Activated T-helper 2 cell treated with anti-CD3 and anti-CD28 coated beads, Interferon-gamma antibody, Interleukin-2, Interleukin-4, amounts not matched to agents 10 μg/mL and 5 μg/mL and 100 μg/mL, durations not matched to agents 14 hours and 24 hours and 36 hours (primary cell): ENCODE measurements at regions of chr20 and their contacts with region 1.

Region 1: GRCh38 chr20:4082406-4083097 is 67.2 kb upstream of the RNF24 start:
- DNase-seq: peak; percentile 70
- H3K4me3 Mint-ChIP-seq: peak overlapping the region; percentile 26
- H3K27ac Mint-ChIP-seq: peak overlapping the region; percentile 90
- H3K4me1 Mint-ChIP-seq: peaks cover 46% of the 10 kb centered on the region
- H3K27me3 Mint-ChIP-seq: no peaks in the 10 kb centered on the region

Region 2: GRCh38 chr20:3888622-3889488 is 193.7 kb before region 1 on chr20 and contains the start of gene PANK2:
- intact Hi-C with region 1: loop called (anchors 5 kb)
- DNase-seq: peak; percentile 98
- H3K4me3 Mint-ChIP-seq: peak within 1 kb of the TSS; percentile 99
- H3K27ac Mint-ChIP-seq: peak within 1 kb of the TSS; percentile 93
- H3K4me1 Mint-ChIP-seq: peaks cover 37% of the 10 kb centered on the region
- H3K27me3 Mint-ChIP-seq: no peaks in the 10 kb centered on the region
- total RNA-seq, gene PANK2: 49.2 and 51.4 TPM in 2 replicates

Region 3: DNA sequence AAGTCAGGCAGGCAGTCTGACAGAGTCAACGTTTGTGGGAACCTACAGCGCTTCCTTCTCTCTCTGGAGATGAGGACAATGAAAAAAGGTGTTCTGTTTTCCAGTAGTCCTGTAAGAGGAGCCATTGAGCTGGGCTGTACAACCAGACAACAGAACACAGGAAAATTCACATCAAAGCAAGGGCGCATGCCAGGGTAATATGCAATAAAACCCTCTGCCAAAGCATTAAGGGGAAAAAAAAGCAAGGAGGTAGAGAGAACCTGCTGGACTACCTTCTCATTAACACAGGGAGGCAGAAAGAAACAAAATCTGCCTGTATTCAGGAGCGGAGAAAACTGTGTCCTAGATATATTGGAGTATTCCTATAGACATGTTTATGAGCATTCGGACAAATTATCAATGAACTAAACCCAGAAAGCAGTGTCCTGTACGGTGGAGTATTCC is 68.5 kb before region 1 on chr20:
- intact Hi-C with region 1: loop called (anchors 1 kb)
- DNase-seq: no peak
- H3K4me3 Mint-ChIP-seq: peak overlapping the region; percentile 82
- H3K27ac Mint-ChIP-seq: peak overlapping the region; percentile 66
- H3K4me1 Mint-ChIP-seq: peaks cover 49% of the 10 kb centered on the region
- H3K27me3 Mint-ChIP-seq: no peaks in the 10 kb centered on the region

Region 4: GRCh38 chr20:4067600-4068261 is 14.8 kb before region 1 on chr20:
- intact Hi-C with region 1: loop called (anchors 2 kb)
- DNase-seq: no peak
- H3K4me3 Mint-ChIP-seq: no peak overlapping the region
- H3K27ac Mint-ChIP-seq: no peak overlapping the region
- H3K4me1 Mint-ChIP-seq: peaks cover 43% of the 10 kb centered on the region
- H3K27me3 Mint-ChIP-seq: no peaks in the 10 kb centered on the region

Region 5: DNA sequence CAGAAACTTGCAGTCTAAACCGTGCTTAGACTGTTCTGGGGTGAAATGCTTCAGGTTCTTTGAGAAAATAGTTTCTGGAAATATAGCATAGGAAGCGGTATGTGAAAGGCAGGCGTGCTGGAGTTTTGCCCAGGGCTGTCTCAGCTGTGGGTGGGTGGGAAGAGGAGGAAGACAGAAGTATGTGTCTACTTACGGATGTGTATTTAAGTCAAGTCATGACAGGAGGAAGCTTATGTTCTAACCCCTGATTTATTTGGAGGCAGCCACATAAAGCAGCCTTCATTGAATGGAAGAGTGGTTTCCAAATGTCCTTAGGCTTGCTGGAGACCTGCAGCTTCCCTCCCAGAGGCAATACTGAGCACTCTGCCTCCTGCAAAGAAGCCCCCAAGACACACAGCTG is 293.3 kb after region 1 on chr20:
- intact Hi-C with region 1: no loop called
- DNase-seq: no peak
- H3K4me3 Mint-ChIP-seq: no peak overlapping the region
- H3K27ac Mint-ChIP-seq: no peak overlapping the region
- H3K4me1 Mint-ChIP-seq: peaks cover 27% of the 10 kb centered on the region
- H3K27me3 Mint-ChIP-seq: peaks cover 21% of the 10 kb centered on the region